B cell (primary cell): ENCODE measurements at regions of chrX and their contacts with region 1.

Region 1: DNA sequence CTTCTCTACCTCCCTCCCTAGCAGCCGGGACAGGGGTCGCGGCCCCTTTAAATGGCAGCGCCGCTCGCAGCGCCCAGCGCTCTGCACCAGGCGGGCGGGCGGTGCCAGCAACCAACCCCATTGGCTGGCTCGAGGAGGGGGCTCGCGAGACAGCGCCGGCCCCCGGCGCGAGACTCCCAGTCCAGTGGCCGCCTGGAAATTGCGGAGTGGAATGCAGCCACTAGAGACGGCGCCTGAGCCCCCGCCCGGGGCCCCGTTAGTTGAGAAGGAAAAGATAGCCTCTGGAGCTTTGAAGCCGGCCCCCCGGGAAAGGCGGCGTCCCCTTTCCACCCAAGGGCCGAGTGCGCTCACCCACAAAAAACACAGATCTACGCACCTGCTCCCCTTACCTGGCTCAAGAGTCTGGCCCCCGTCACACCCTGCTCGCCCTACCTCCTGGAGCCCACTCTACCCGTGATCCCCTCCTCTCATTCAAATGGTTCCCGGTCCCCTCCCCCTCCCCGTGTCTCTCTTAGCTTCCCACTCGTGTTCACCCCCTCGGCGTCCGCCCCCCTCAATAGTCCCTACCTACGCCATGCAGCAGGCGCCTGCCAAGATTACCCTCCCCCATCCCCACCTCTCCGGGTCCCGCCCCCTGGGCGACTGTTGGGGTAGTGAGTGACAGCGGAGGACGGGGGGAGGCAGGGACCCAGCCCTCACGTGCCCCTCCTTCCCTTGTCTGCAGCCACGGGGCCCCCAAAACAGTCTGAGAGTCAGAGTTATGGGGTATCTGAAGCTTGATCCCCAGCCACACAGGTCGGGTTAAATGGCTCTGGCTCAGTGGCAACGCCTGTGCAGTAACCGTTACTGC is at the start of gene ZMYM3:
- DNase-seq: peak; percentile 85
- ATAC-seq: peak; percentile 79
- H3K4me3 ChIP-seq: peak within 1 kb of the TSS; percentile 65 to 84 (median 80)
- H3K4me3 Mint-ChIP-seq: peak within 1 kb of the TSS; percentile 88
- H3K27ac ChIP-seq: peak within 1 kb of the TSS; percentile 84 to 87
- H3K27ac Mint-ChIP-seq: peak within 1 kb of the TSS; percentile 89
- H3K4me1 ChIP-seq: peaks cover 15 to 22% of the 10 kb centered on the region in 2 donors
- H3K4me1 Mint-ChIP-seq: peaks cover 23% of the 10 kb centered on the region
- H3K27me3 ChIP-seq: no peaks in the 10 kb centered on the region
- H3K27me3 Mint-ChIP-seq: no peaks in the 10 kb centered on the region
- CTCF ChIP-seq: no peak
- total RNA-seq, gene ZMYM3: 40.0 and 40.6 TPM in 2 replicates

Region 2: DNA sequence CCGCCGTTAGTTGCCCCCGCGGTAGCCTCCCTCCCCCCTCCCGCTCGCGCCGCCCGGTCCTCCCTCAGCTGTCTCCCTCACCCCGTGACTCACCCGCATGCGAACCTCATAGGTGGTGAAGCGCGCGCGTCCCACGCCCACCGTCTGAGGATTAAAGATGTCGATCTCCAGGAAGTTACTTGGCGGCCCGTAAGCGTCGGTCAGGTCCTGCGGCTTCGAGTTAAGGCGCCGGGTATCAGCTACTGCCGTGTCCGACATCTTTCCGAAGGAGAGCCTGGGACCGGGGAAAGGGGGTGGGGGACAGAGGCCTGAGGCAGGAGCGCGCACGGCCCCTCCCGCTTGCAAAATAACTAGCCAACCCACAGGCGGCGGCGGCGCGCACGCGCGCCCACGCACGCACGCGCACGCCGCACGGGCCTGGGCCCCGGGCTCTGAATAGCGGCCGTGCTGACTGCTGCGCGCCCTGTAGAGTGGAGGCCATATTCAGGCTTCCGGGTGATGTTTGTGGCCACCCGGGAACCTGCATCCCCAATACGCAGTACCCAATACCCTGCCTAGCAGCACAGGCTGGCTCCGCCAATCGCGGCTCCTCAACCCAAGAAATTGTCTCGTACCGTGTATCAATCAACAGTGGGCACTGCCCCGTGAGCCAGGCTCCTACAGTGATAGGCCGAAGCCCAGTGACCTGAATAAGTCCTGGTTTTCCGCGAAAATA is 186.1 kb before region 1 on chrX and contains the start of gene SNX12:
- CTCF ChIA-PET with region 1: no interaction called
- POLR2A ChIA-PET with region 1: no interaction called
- intact Hi-C with region 1: loop called (anchors 1 kb)
- DNase-seq: peak; percentile 93
- ATAC-seq: peak; percentile 93
- H3K4me3 ChIP-seq: peak within 1 kb of the TSS; percentile 74 to 79 (median 76)
- H3K4me3 Mint-ChIP-seq: peak within 1 kb of the TSS; percentile 96
- H3K27ac ChIP-seq: peak within 1 kb of the TSS; percentile 74 to 85
- H3K27ac Mint-ChIP-seq: peak within 1 kb of the TSS; percentile 96
- H3K4me1 ChIP-seq: peaks cover 0 to 12% of the 10 kb centered on the region in 2 donors
- H3K4me1 Mint-ChIP-seq: peaks cover 17% of the 10 kb centered on the region
- H3K27me3 ChIP-seq: no peaks in the 10 kb centered on the region
- H3K27me3 Mint-ChIP-seq: no peaks in the 10 kb centered on the region
- CTCF ChIP-seq: no peak
- total RNA-seq, gene SNX12: 32.6 and 42.9 TPM in 2 replicates

Region 3: GRCh38 chrX:71111141-71111843 is 143.0 kb before region 1 on chrX and contains the start of gene IL2RG:
- CTCF ChIA-PET with region 1: no interaction called
- POLR2A ChIA-PET with region 1: interaction called, 3 read pairs
- intact Hi-C with region 1: loop called (anchors 1 kb)
- DNase-seq: peak; percentile 90
- ATAC-seq: peak; percentile 93
- H3K4me3 ChIP-seq: peak within 1 kb of the TSS; percentile 75 to 90 (median 82)
- H3K4me3 Mint-ChIP-seq: peak within 1 kb of the TSS; percentile 98
- H3K27ac ChIP-seq: peak within 1 kb of the TSS; percentile 98
- H3K27ac Mint-ChIP-seq: peak within 1 kb of the TSS; percentile 99
- H3K4me1 ChIP-seq: peaks cover 53 to 65% of the 10 kb centered on the region in 2 donors
- H3K4me1 Mint-ChIP-seq: peaks cover 63% of the 10 kb centered on the region
- H3K27me3 ChIP-seq: no peaks in the 10 kb centered on the region
- H3K27me3 Mint-ChIP-seq: no peaks in the 10 kb centered on the region
- CTCF ChIP-seq: no peak
- total RNA-seq, gene IL2RG: 276 and 297 TPM in 2 replicates

Region 4: GRCh38 chrX:71283403-71284143 is 29.3 kb after region 1 on chrX and contains the start of gene NONO:
- CTCF ChIA-PET with region 1: interaction called, 14 read pairs
- POLR2A ChIA-PET with region 1: interaction called, 40 read pairs
- intact Hi-C with region 1: loop called (anchors 1 kb)
- DNase-seq: peak; percentile 96
- ATAC-seq: peak; percentile 91
- H3K4me3 ChIP-seq: peak within 1 kb of the TSS; percentile 55 to 83 (median 68)
- H3K4me3 Mint-ChIP-seq: peak within 1 kb of the TSS; percentile 95
- H3K27ac ChIP-seq: peak within 1 kb of the TSS; percentile 94 to 95
- H3K27ac Mint-ChIP-seq: peak within 1 kb of the TSS; percentile 98
- H3K4me1 ChIP-seq: peaks cover 16 to 21% of the 10 kb centered on the region in 2 donors
- H3K4me1 Mint-ChIP-seq: peaks cover 23% of the 10 kb centered on the region
- H3K27me3 ChIP-seq: no peaks in the 10 kb centered on the region
- H3K27me3 Mint-ChIP-seq: no peaks in the 10 kb centered on the region
- CTCF ChIP-seq: no peak
- total RNA-seq, gene NONO: 286 TPM in 2 replicates

Region 5: GRCh38 chrX:71492231-71493065 is 238.1 kb after region 1 on chrX:
- CTCF ChIA-PET with region 1: no interaction called
- POLR2A ChIA-PET with region 1: no interaction called
- intact Hi-C with region 1: no loop called
- DNase-seq: peak; percentile 60
- ATAC-seq: no peak
- H3K4me3 ChIP-seq: peak overlapping the region; percentile 11 to 68 (median 59)
- H3K4me3 Mint-ChIP-seq: no peak overlapping the region
- H3K27ac ChIP-seq: peak overlapping the region in 1 of 2 donors; percentile 33
- H3K27ac Mint-ChIP-seq: no peak overlapping the region
- H3K4me1 ChIP-seq: peaks cover 0 to 4% of the 10 kb centered on the region in 2 donors
- H3K4me1 Mint-ChIP-seq: no peaks in the 10 kb centered on the region
- H3K27me3 ChIP-seq: no peaks in the 10 kb centered on the region
- H3K27me3 Mint-ChIP-seq: no peaks in the 10 kb centered on the region
- CTCF ChIP-seq: no peak

Region 6: GRCh38 chrX:71532753-71533425 is 278.6 kb after region 1 on chrX and contains the start of gene OGT:
- CTCF ChIA-PET with region 1: no interaction called
- POLR2A ChIA-PET with region 1: no interaction called
- intact Hi-C with region 1: loop called (anchors 10 kb)
- DNase-seq: peak; percentile 95
- ATAC-seq: peak; percentile 85
- H3K4me3 ChIP-seq: peak within 1 kb of the TSS; percentile 75 to 96 (median 86)
- H3K4me3 Mint-ChIP-seq: peak within 1 kb of the TSS; percentile 97
- H3K27ac ChIP-seq: peak within 1 kb of the TSS; percentile 87
- H3K27ac Mint-ChIP-seq: peak within 1 kb of the TSS; percentile 93
- H3K4me1 ChIP-seq: peaks cover 5 to 27% of the 10 kb centered on the region in 2 donors
- H3K4me1 Mint-ChIP-seq: peaks cover 26% of the 10 kb centered on the region
- H3K27me3 ChIP-seq: no peaks in the 10 kb centered on the region
- H3K27me3 Mint-ChIP-seq: no peaks in the 10 kb centered on the region
- CTCF ChIP-seq: no peak
- total RNA-seq, gene OGT: 307 and 330 TPM in 2 replicates